BJ (cell line): ENCODE measurements at regions of chrX and their contacts with region 1.

Region 1: GRCh38 chrX:151004082-151004481 is 20.9 kb downstream of the HMGB3 start:
- DNase-seq: no peak
- H3K4me3 ChIP-seq: no peak overlapping the region
- H3K27me3 ChIP-seq: no peaks in the 10 kb centered on the region
- CTCF ChIP-seq: no peak

Region 2: DNA sequence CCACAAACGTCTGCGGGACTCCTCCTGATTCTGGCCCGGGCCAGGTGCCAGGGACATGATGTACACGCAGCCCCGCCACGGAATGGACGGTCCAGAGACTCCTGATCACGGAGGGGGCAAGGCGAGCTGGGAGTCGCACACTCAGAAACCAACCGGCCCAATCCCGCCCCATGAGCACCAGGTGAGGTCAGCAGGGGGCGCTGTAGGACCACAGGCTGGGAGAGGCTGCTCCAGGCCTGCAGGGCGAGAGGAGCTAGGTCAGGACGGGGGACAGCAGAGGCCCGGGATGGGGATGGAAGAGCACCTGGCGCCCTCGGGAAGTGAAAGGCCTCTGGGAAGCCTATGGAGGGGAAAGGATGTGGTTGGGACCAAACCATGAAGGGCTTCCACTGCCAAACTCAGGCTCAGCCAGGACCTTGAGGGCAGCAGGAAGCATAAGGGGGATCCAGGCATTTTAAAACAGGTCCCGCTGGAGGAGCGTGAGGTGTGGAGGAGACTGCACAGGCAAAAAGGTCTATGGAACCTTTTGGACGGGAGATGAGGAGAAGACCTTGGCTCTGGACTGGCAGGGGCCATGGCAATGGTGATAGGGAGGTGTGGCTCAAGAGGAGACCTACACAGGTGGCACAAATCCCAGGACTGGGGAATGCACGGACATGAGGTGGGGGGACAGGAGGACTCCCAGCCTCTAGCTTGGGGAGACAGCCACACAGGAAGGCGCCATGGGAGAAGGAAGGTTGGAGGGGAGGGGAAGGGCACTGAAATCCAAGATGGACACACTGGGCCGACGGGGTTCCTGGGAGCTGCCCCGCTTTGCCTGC is 231.7 kb before region 1 on chrX:
- CTCF ChIA-PET with region 1: interaction called, 22 read pairs
- POLR2A ChIA-PET with region 1: no interaction called
- DNase-seq: no peak
- H3K4me3 ChIP-seq: no peak overlapping the region
- H3K27me3 ChIP-seq: no peaks in the 10 kb centered on the region
- CTCF ChIP-seq: peak; percentile 85